ENCODE measurements at regions of chr5 and their contacts with region 1.

Region 1: DNA sequence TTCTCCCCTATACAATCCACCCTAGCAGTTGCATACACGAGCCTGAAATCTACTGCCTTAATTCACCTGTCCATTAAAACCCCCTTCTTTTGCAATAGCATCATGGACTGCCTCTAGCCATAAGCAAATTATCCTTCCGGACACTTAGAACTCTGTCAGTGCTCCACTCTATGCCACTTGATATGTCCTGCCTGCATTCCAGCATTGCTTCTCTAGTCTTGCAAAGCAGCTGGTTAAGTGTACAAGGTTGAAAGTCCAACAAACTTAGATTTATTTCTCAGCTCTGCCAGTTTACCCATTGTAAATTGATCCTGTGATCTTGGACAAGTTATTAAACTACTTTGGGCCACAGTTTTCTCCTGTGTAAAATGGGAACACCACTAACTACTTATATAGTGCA is 197.9 kb downstream of the EPB41L4A start:
- DNase-seq: no peak
- ATAC-seq: no peak; a peak in 1 of 6 replicates
- H3K4me3 ChIP-seq: no peak overlapping the region
- H3K27ac ChIP-seq: no peak overlapping the region
- H3K4me1 ChIP-seq: peaks cover 21% of the 10 kb centered on the region; the same call in 2 of the 3 replicates
- CTCF ChIP-seq: no peak
- EP300 ChIP-seq: no peak
- POLR2A ChIP-seq: no peak
- RAD21 ChIP-seq: no peak

Region 2: GRCh38 chr5:112210430-112211005 is 10.6 kb before region 1 on chr5:
- CTCF ChIA-PET with region 1: interaction called, 11 read pairs
- POLR2A ChIA-PET with region 1: no interaction called
- DNase-seq: peak; percentile 9 to 66
- ATAC-seq: peak; percentile 70 to 90; a peak in 5 of 6 replicates
- H3K4me3 ChIP-seq: no peak overlapping the region
- H3K27ac ChIP-seq: no peak overlapping the region
- H3K4me1 ChIP-seq: no peaks in the 10 kb centered on the region
- CTCF ChIP-seq: peak; percentile 76
- EP300 ChIP-seq: no peak
- POLR2A ChIP-seq: no peak
- RAD21 ChIP-seq: peak; percentile 80 to 82